Caco-2 (cell line): ENCODE measurements at regions of chr1 and their contacts with region 1.

Region 1: DNA sequence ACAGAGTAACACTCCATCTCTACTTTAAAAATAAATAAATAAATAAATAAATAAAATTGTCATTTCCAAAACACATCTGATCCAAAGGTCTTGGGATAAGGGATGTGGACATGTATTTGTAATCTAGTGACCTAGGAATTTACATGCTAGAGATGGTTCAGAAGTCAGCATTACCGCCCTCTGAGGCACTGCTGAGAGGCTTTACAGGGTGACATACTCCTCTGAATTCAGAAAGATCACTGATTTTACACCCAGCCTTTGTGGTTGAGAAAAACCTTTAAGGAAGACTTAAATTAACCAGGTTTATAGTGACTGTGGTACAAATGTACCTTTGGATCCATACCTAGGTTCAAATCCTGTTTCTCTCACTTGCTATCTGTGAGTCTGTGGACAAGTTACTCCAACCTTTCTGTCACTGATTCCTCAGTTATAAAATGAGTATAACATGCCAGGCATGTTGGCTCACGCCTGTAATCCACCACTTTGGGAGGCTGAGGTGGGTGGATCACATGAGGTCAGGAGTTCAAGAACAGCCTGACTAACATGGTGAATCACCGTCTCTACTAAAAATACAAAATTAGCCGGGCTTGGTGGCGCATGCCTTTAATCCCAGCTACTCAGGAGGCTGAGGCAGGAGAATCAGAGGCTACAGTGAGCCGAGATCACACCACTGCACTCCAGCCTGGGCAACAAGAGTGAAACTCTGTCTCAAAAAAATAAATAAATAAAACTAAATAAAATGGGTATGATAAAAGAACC is 20.1 kb downstream of the OSBPL9 start:
- DNase-seq: no peak
- H3K4me3 ChIP-seq: no peak overlapping the region
- H3K4me3 Mint-ChIP-seq: no peak overlapping the region
- H3K27ac Mint-ChIP-seq: no peak overlapping the region
- H3K4me1 ChIP-seq: peaks cover 23% of the 10 kb centered on the region
- H3K4me1 Mint-ChIP-seq: peaks cover 12% of the 10 kb centered on the region
- H3K27me3 ChIP-seq: no peaks in the 10 kb centered on the region
- H3K27me3 Mint-ChIP-seq: no peaks in the 10 kb centered on the region
- CTCF ChIP-seq: no peak

Region 2: GRCh38 chr1:51392241-51392640 is 244.7 kb before region 1 on chr1:
- CTCF ChIA-PET with region 1: no interaction called
- POLR2A ChIA-PET with region 1: no interaction called
- intact Hi-C with region 1: no loop called
- DNase-seq: no peak
- H3K4me3 ChIP-seq: no peak overlapping the region
- H3K4me3 Mint-ChIP-seq: no peak overlapping the region
- H3K27ac Mint-ChIP-seq: no peak overlapping the region
- H3K4me1 ChIP-seq: no peaks in the 10 kb centered on the region
- H3K4me1 Mint-ChIP-seq: no peaks in the 10 kb centered on the region
- H3K27me3 ChIP-seq: no peaks in the 10 kb centered on the region
- H3K27me3 Mint-ChIP-seq: no peaks in the 10 kb centered on the region
- CTCF ChIP-seq: no peak

Region 3: DNA sequence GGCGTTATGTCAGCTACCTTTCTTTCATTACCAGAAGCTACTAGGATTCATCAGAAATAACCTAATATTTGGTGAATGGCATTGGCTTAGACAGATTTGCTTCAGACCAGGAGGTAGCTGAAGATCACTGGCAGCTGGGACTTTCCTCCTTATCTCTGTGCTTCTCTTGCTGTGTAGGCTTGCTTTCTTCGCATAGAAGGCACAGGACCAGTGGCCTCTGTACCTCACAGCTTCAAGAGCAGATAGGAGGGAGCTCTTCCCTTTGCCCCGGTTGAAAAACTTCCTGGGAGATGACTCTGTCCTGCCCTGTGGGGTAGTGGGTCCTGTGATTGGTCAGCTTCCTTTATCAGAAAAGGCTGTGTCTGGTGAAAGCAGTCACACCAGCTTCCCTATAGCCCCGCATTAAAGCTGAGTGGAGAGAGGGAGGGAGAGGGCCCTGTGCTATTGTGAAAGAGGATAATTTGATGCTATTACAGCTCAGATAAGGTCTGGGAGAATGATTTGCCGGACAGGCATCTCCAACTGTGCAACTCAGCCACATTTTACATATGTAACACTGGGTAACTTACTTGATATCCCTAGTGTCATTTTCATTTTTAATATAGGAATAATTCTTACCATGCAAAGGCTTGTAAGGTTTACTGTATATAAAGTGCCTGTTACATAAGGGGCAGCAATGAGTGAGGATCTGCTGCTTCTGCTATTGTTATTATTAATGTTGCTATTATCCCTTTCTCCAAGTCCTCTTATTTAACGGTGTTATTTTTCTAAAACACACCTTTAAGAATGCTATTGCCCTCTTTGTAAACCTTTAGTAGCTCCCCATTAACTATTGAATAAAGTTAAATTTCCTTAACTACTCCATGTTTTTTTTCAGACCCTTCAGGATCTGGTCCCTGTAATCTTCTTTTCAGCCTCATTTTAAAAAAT is 11.5 kb after region 1 on chr1:
- CTCF ChIA-PET with region 1: no interaction called
- POLR2A ChIA-PET with region 1: interaction called, 3 read pairs
- intact Hi-C with region 1: loop called (anchors 1 kb)
- DNase-seq: peak; percentile 76 to 90
- H3K4me3 ChIP-seq: no peak overlapping the region
- H3K4me3 Mint-ChIP-seq: peak overlapping the region; percentile 38
- H3K27ac Mint-ChIP-seq: no peak overlapping the region
- H3K4me1 ChIP-seq: peaks cover 10% of the 10 kb centered on the region
- H3K4me1 Mint-ChIP-seq: peaks cover 18% of the 10 kb centered on the region
- H3K27me3 ChIP-seq: no peaks in the 10 kb centered on the region
- H3K27me3 Mint-ChIP-seq: no peaks in the 10 kb centered on the region
- CTCF ChIP-seq: no peak

Region 4: GRCh38 chr1:51690285-51690961 is 53.5 kb after region 1 on chr1:
- CTCF ChIA-PET with region 1: no interaction called
- POLR2A ChIA-PET with region 1: no interaction called
- intact Hi-C with region 1: loop called (anchors 5 kb)
- DNase-seq: peak in 1 of 2 experiments; percentile 27
- H3K4me3 ChIP-seq: no peak overlapping the region
- H3K4me3 Mint-ChIP-seq: no peak overlapping the region
- H3K27ac Mint-ChIP-seq: no peak overlapping the region
- H3K4me1 ChIP-seq: peaks cover 18% of the 10 kb centered on the region
- H3K4me1 Mint-ChIP-seq: peaks cover 8% of the 10 kb centered on the region
- H3K27me3 ChIP-seq: no peaks in the 10 kb centered on the region
- H3K27me3 Mint-ChIP-seq: no peaks in the 10 kb centered on the region
- CTCF ChIP-seq: no peak